Left cardiac atrium (tissue), 4 donors: ENCODE measurements at regions of chr6 and their contacts with region 1.

Region 1: GRCh38 chr6:31680840-31681671 is at the start of gene LY6G5C:
- DNase-seq: peak; percentile 86
- ATAC-seq: peak; percentile 84 to 92
- total RNA-seq, gene LY6G5C: 2.2 to 2.5 TPM

Region 2: GRCh38 chr6:30814136-30815040 is 866.7 kb before region 1 on chr6:
- intact Hi-C with region 1: no loop called
- DNase-seq: no peak
- ATAC-seq: peak in 1 of 2 donors; percentile 65

Region 3: GRCh38 chr6:31958741-31959739 is 278.0 kb after region 1 on chr6 and contains the starts of genes NELFE and SKIC2:
- intact Hi-C with region 1: loop called in 1 of 2 experiments (anchors 10 kb)
- DNase-seq: peak; percentile 98
- ATAC-seq: peak; percentile 98 to 100
- total RNA-seq, gene NELFE: 39.8 to 53.7 TPM
- total RNA-seq, gene SKIC2: 36.8 to 45.1 TPM